Natural killer cell (primary cell): ENCODE measurements at regions of chr15 and their contacts with region 1.

Region 1: GRCh38 chr15:90869601-90870353 is 1.4 kb downstream of the FURIN start:
- DNase-seq: peak in 1 of 2 donors; percentile 58
- ATAC-seq: peak in 2 of 3 donors; percentile 17 to 21
- H3K4me3 ChIP-seq: no peak overlapping the region
- H3K4me3 Mint-ChIP-seq: peak overlapping the region; percentile 97
- H3K27ac ChIP-seq: peak overlapping the region; percentile 48
- H3K27ac Mint-ChIP-seq: peak overlapping the region; percentile 90 to 93
- H3K4me1 ChIP-seq: peaks cover 45% of the 10 kb centered on the region
- H3K4me1 Mint-ChIP-seq: peaks cover 27 to 50% of the 10 kb centered on the region in 2 donors
- H3K27me3 ChIP-seq: no peaks in the 10 kb centered on the region
- H3K27me3 Mint-ChIP-seq: no peaks in the 10 kb centered on the region
- CTCF ChIP-seq: no peak

Region 2: GRCh38 chr15:90818251-90819210 is 51.2 kb before region 1 on chr15:
- intact Hi-C with region 1: loop called (anchors 5 kb)
- DNase-seq: peak; percentile 27 to 55
- ATAC-seq: peak in 1 of 3 donors; percentile 44
- H3K4me3 ChIP-seq: no peak overlapping the region
- H3K4me3 Mint-ChIP-seq: peak overlapping the region; percentile 80
- H3K27ac ChIP-seq: peak overlapping the region; percentile 79
- H3K27ac Mint-ChIP-seq: peak overlapping the region; percentile 86 to 96
- H3K4me1 ChIP-seq: peaks cover 76% of the 10 kb centered on the region
- H3K4me1 Mint-ChIP-seq: peaks cover 67 to 70% of the 10 kb centered on the region in 2 donors
- H3K27me3 ChIP-seq: no peaks in the 10 kb centered on the region
- H3K27me3 Mint-ChIP-seq: no peaks in the 10 kb centered on the region
- CTCF ChIP-seq: peak; percentile 28

Region 3: GRCh38 chr15:90851114-90851513 is 18.7 kb before region 1 on chr15:
- intact Hi-C with region 1: loop called (anchors 1 kb)
- DNase-seq: peak in 1 of 2 donors; percentile 68
- ATAC-seq: peak; percentile 24 to 51 (median 42)
- H3K4me3 ChIP-seq: no peak overlapping the region
- H3K4me3 Mint-ChIP-seq: peak overlapping the region; percentile 76
- H3K27ac ChIP-seq: no peak overlapping the region
- H3K27ac Mint-ChIP-seq: peak overlapping the region; percentile 80 to 85
- H3K4me1 ChIP-seq: peaks cover 57% of the 10 kb centered on the region
- H3K4me1 Mint-ChIP-seq: peaks cover 35 to 46% of the 10 kb centered on the region in 2 donors
- H3K27me3 ChIP-seq: no peaks in the 10 kb centered on the region
- H3K27me3 Mint-ChIP-seq: peaks cover 0 to 2% of the 10 kb centered on the region in 2 donors
- CTCF ChIP-seq: no peak